ENCODE measurements at regions of chr3 and their contacts with region 1.

Region 1: GRCh38 chr3:49339945-49340800 is at the start of gene USP4:
- DNase-seq: peak; percentile 90
- ATAC-seq: peak; percentile 91
- H3K4me3 Mint-ChIP-seq: peak within 1 kb of the TSS; percentile 97
- H3K27ac Mint-ChIP-seq: peak within 1 kb of the TSS; percentile 98
- H3K4me1 Mint-ChIP-seq: peaks cover 40% of the 10 kb centered on the region
- H3K27me3 Mint-ChIP-seq: no peaks in the 10 kb centered on the region
- total RNA-seq, gene USP4: 89.6 to 90.0 TPM

Region 2: DNA sequence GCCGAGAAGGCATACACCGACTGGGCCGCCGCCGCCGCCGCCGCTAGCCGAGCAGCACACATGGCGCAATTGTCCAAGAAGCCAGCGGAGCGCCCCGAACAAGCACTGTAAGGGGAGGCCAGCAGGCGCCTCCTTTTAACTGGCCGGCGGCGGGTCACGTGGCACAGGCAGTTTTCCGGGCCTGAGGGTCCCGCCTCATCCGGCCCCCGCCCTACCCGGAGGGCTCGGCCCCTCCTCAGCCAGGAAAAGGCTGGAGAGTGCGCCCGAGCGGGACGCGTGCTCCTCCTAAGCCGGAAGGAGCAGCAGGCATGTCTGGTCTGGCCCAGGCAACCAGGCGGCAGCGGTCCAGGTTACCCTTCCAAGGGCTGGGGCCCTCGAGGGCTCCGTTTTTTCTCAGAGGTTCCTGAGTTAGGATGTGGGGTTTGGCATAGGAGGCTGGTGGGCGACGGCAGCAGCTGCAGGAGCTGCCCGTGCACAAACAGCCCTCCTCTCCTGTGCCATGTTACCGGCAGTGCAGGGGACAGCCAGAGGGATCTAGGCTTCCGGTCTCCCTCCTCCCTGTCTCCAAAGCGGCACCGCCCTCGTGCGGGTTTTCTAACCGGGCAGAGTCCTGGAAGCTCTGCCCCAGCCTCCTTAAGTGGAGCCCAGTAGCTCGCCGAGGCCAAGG is 18.2 kb after region 1 on chr3 and contains the start of gene GPX1:
- POLR2A ChIA-PET with region 1: interaction called, 46 read pairs
- DNase-seq: peak; percentile 87
- ATAC-seq: peak; percentile 87
- H3K4me3 Mint-ChIP-seq: peak within 1 kb of the TSS; percentile 89
- H3K27ac Mint-ChIP-seq: peak within 1 kb of the TSS; percentile 87
- H3K4me1 Mint-ChIP-seq: peaks cover 26% of the 10 kb centered on the region
- H3K27me3 Mint-ChIP-seq: no peaks in the 10 kb centered on the region
- total RNA-seq, gene GPX1: 86.4 to 90.6 TPM

Region 3: DNA sequence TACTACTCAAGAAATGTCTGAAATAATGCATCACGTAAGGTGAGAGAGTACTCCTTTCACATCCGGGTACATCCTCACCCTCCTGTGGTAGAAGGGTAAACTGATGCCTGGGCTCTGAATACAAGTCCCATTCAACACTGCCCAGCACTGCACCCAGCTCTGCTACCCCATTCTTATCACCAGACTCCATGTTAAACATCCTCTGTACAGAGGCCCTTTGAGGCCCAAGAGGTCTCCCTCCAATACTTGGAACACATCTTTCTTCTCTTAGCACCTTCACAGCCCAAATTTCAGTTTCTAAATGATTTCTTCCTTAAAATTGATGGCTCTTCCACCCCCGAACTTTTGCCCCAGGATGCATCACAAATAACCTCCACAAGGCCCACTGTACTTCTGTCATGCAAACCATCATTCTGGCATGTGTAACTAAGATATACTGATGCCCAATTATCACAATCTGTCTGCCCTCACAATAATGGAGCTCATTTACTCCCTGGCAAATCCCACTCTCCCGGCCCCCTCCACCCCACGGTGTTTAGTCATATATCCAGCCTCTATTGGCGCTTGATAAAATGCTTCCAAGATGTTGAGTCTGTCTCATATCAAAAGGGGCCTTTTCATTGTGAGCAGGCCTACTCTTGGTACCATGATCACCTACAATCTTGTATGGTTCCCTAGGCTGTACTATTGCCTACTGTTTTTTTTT is 30.6 kb after region 1 on chr3:
- POLR2A ChIA-PET with region 1: no interaction called
- DNase-seq: no peak
- ATAC-seq: no peak
- H3K4me3 Mint-ChIP-seq: no peak overlapping the region
- H3K27ac Mint-ChIP-seq: no peak overlapping the region
- H3K4me1 Mint-ChIP-seq: peaks cover 16% of the 10 kb centered on the region
- H3K27me3 Mint-ChIP-seq: no peaks in the 10 kb centered on the region

Region 4: GRCh38 chr3:49428697-49429100 is 88.5 kb after region 1 on chr3:
- POLR2A ChIA-PET with region 1: interaction called, 27 read pairs
- DNase-seq: no peak
- ATAC-seq: no peak
- H3K4me3 Mint-ChIP-seq: peak overlapping the region; percentile 93
- H3K27ac Mint-ChIP-seq: peak overlapping the region; percentile 96
- H3K4me1 Mint-ChIP-seq: peaks cover 25% of the 10 kb centered on the region
- H3K27me3 Mint-ChIP-seq: no peaks in the 10 kb centered on the region

Region 5: GRCh38 chr3:49445381-49445780 is 105.2 kb after region 1 on chr3:
- POLR2A ChIA-PET with region 1: interaction called, 32 read pairs
- DNase-seq: no peak
- ATAC-seq: no peak
- H3K4me3 Mint-ChIP-seq: no peak overlapping the region
- H3K27ac Mint-ChIP-seq: peak overlapping the region; percentile 43
- H3K4me1 Mint-ChIP-seq: peaks cover 20% of the 10 kb centered on the region
- H3K27me3 Mint-ChIP-seq: no peaks in the 10 kb centered on the region

Region 6: GRCh38 chr3:49454458-49454857 is 114.3 kb after region 1 on chr3:
- POLR2A ChIA-PET with region 1: interaction called, 21 read pairs
- DNase-seq: no peak
- ATAC-seq: peak; percentile 42
- H3K4me3 Mint-ChIP-seq: no peak overlapping the region
- H3K27ac Mint-ChIP-seq: no peak overlapping the region
- H3K4me1 Mint-ChIP-seq: no peaks in the 10 kb centered on the region
- H3K27me3 Mint-ChIP-seq: peaks cover 5% of the 10 kb centered on the region